ENCODE measurements at regions of chr3 and their contacts with region 1.

Region 1: DNA sequence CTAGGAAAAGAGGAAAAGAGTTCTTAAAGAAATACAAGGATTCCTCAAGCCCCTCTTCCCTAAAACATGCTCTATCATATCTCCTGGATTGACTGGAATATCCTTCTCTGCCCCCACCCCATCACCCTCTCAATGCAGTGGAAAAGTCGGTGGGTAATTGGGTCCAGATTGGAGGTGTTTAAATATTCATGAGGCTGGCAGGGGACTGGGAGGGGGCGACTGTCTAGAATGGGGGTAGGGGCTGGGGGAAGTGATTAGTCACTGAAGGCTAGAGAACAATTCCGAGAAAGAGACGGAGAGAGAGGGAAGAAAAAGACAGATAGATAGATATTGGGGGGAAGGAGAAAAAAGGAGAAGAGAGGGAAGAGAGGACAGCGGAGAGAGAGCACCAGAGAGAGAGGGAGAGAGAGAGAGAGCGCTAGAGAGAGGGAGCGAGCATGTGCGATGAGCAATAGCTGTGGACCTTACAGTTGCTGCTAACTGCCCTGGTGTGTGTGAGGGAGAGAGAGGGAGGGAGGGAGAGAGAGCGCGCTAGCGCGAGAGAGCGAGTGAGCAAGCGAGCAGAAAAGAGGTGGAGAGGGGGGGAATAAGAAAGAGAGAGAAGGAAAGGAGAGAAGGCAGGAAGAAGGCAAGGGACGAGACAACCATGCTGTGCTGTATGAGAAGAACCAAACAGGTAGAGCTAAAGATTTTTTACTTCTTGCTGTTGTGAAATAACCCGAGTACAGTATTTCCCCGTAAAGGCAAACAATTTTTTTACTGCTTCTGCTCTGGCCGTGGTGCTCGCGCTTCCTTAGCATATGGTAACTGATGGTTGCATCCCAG is at the start of gene GAP43:
- DNase-seq: peak; percentile 29
- H3K4me3 ChIP-seq: peak within 1 kb of the TSS; percentile 35
- H3K27me3 ChIP-seq: peaks cover 3% of the 10 kb centered on the region; the same call in 1 of the 2 replicates
- CTCF ChIP-seq: no peak
- polyA plus RNA-seq, gene GAP43: 0.12 and 0.33 TPM in 2 replicates

Region 2: GRCh38 chr3:115004201-115005140 is 618.8 kb before region 1 on chr3:
- CTCF ChIA-PET with region 1: no interaction called
- POLR2A ChIA-PET with region 1: no interaction called
- DNase-seq: no peak
- H3K4me3 ChIP-seq: no peak overlapping the region
- H3K27me3 ChIP-seq: no peaks in the 10 kb centered on the region
- CTCF ChIP-seq: no peak

Region 3: GRCh38 chr3:115658337-115659181 is 35.3 kb after region 1 on chr3:
- CTCF ChIA-PET with region 1: no interaction called
- POLR2A ChIA-PET with region 1: interaction called, 11 read pairs
- DNase-seq: peak; percentile 31
- H3K4me3 ChIP-seq: peak overlapping the region; percentile 51
- H3K27me3 ChIP-seq: no peaks in the 10 kb centered on the region
- CTCF ChIP-seq: no peak

Region 4: DNA sequence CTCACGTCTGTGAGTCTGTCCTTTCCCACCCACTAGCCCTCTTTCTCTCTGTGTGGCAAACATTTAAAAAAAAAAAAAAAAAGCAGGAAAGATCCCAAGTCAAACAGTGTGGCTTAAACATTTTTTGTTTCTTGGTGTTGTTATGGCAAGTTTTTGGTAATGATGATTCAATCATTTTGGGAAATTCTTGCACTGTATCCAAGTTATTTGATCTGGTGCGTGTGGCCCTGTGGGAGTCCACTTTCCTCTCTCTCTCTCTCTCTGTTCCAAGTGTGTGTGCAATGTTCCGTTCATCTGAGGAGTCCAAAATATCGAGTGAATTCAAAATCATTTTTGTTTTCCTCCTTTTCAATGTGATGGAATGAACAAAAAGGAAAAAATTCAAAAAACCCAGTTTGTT is 97.7 kb after region 1 on chr3:
- CTCF ChIA-PET with region 1: no interaction called
- POLR2A ChIA-PET with region 1: no interaction called
- DNase-seq: no peak
- H3K4me3 ChIP-seq: no peak overlapping the region
- H3K27me3 ChIP-seq: no peaks in the 10 kb centered on the region
- CTCF ChIP-seq: no peak

Measured in BJ (cell line).